ENCODE measurements at regions of chr1 and their contacts with region 1.

Region 1: DNA sequence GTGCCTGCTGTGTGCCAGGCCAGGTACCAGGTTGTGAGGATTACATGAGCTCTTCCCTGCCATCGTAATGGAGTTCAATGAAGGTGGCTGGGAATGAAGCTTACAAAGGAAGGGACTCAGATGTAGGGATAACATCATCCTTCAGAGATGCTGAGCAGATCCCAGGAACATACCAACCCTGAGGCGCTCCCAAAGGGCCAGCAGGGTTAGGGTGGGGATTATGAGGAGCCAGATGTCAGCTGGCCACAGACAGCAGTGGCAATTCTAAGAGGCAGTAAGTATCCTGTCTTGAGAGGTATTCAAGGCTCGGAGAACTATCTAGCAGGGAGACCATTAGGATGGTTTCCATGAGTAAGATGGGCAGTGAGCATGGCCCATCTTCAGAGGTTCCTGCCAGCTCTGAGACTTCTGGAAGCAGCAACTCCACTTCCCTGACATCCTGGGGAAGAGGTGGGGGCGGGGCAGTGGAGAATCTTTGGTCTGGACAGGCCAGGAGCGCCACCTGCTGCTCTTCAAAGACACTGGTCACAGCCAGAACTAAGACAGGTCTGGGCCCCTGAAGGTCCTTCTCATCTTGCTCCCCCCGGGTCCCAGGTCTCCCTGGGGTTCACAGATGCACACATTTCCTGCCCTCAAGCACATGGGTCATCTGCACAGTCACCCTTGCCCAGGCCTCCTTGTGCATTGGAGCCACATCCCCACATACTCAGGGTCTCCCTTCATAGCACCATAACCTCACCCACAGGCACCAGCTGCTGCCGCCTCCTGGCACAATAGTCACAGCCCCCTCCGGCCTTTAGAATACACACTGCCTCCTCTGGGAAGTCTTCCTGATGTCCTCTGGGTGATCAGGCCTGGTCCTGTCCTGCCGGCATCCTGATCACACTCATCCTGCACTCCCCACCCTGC is 2.7 kb upstream of the SDC3 start:
- DNase-seq: peak; percentile 88
- H3K4me3 ChIP-seq: no peak overlapping the region; a peak in 1 of 4 replicates
- H3K27ac ChIP-seq: no peak overlapping the region
- H3K4me1 ChIP-seq: peaks cover 4 to 22% of the 10 kb centered on the region in 2 experiments; a peak in 2 of 4 replicates
- H3K27me3 ChIP-seq: no peaks in the 10 kb centered on the region
- CTCF ChIP-seq: peak; percentile 87
- EP300 ChIP-seq: no peak
- RAD21 ChIP-seq: peak; percentile 98

Region 2: GRCh38 chr1:30732277-30732996 is 178.9 kb before region 1 on chr1:
- CTCF ChIA-PET with region 1: interaction called, 32 read pairs
- POLR2A ChIA-PET with region 1: no interaction called
- DNase-seq: no peak
- H3K4me3 ChIP-seq: no peak overlapping the region
- H3K27ac ChIP-seq: no peak overlapping the region
- H3K4me1 ChIP-seq: peaks cover 6% of the 10 kb centered on the region in 2 experiments; a peak in 3 of 4 replicates
- H3K27me3 ChIP-seq: no peaks in the 10 kb centered on the region
- CTCF ChIP-seq: no peak
- EP300 ChIP-seq: no peak
- RAD21 ChIP-seq: no peak

Region 3: GRCh38 chr1:30823969-30824735 is 87.1 kb before region 1 on chr1:
- CTCF ChIA-PET with region 1: interaction called, 1,422 read pairs
- POLR2A ChIA-PET with region 1: interaction called, 3 read pairs
- DNase-seq: peak; percentile 99
- H3K4me3 ChIP-seq: peak overlapping the region; percentile 54 to 61
- H3K27ac ChIP-seq: peak overlapping the region; percentile 96 to 97
- H3K4me1 ChIP-seq: peaks cover 16 to 25% of the 10 kb centered on the region in 2 experiments
- H3K27me3 ChIP-seq: no peaks in the 10 kb centered on the region
- CTCF ChIP-seq: no peak
- EP300 ChIP-seq: peak; percentile 45 to 91; a peak in 3 of 4 replicates
- RAD21 ChIP-seq: no peak

Region 4: DNA sequence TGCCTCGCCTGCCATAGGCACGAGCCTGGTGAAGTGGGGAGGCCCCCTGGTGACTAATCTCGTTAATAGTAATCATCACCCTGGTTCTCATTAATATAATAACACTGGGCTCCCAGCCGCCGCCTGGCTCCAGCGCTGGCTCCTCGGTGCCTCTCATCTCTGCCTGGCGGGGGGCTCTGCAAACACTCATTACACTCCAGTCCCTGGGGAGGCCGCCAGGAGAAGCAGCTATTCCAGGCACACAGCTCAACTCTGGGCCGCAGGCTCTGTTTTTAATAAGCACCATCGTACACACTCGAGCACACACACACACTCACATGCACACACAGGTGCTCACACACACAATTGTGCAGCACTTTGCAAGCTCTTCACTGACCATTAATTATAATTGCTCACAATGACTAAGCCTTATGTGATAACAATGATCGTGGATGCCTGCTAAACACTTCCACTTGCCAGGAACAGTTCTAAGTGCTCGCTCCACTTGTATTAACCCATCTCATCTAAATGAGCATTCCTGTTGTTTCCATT is 55.0 kb before region 1 on chr1:
- CTCF ChIA-PET with region 1: interaction called, 12 read pairs
- POLR2A ChIA-PET with region 1: no interaction called
- DNase-seq: peak; percentile 68
- H3K4me3 ChIP-seq: no peak overlapping the region
- H3K27ac ChIP-seq: peak overlapping the region in 1 of 2 experiments; percentile 26; a peak in 1 of 4 replicates
- H3K4me1 ChIP-seq: peaks cover 8 to 47% of the 10 kb centered on the region in 2 experiments; a peak in 2 of 4 replicates
- H3K27me3 ChIP-seq: no peaks in the 10 kb centered on the region
- CTCF ChIP-seq: 0 out of 2 replicates have a peak, but pooled peaks have one; percentile 8
- EP300 ChIP-seq: no peak
- RAD21 ChIP-seq: no peak

Region 5: GRCh38 chr1:30900931-30901560 is 10.3 kb before region 1 on chr1:
- CTCF ChIA-PET with region 1: interaction called, 32 read pairs
- POLR2A ChIA-PET with region 1: no interaction called
- DNase-seq: no peak
- H3K4me3 ChIP-seq: no peak overlapping the region
- H3K27ac ChIP-seq: no peak overlapping the region
- H3K4me1 ChIP-seq: peaks cover 0 to 31% of the 10 kb centered on the region in 2 experiments; a peak in 1 of 4 replicates
- H3K27me3 ChIP-seq: no peaks in the 10 kb centered on the region
- CTCF ChIP-seq: no peak
- EP300 ChIP-seq: no peak
- RAD21 ChIP-seq: no peak

Region 6: GRCh38 chr1:30942326-30942963 is 31.1 kb after region 1 on chr1:
- CTCF ChIA-PET with region 1: interaction called, 11 read pairs
- POLR2A ChIA-PET with region 1: no interaction called
- DNase-seq: no peak
- H3K4me3 ChIP-seq: no peak overlapping the region
- H3K27ac ChIP-seq: no peak overlapping the region
- H3K4me1 ChIP-seq: no peaks in the 10 kb centered on the region
- H3K27me3 ChIP-seq: no peaks in the 10 kb centered on the region
- CTCF ChIP-seq: no peak
- EP300 ChIP-seq: no peak
- RAD21 ChIP-seq: no peak

Measured in SK-N-SH (cell line).